Left lung (tissue), 14 donors: ENCODE measurements at regions of chr15 and their contacts with region 1.

Region 1: GRCh38 chr15:77186594-77187011 is 115.7 kb upstream of the TSPAN3 start:
- DNase-seq: peak in 2 of 4 donors; percentile 42 to 54
- ATAC-seq: peak; percentile 18
- H3K4me3 ChIP-seq: no peak overlapping the region
- H3K27ac ChIP-seq: peak overlapping the region in 1 of 2 donors; percentile 67
- H3K4me1 ChIP-seq: peaks cover 22 to 49% of the 10 kb centered on the region in 2 donors
- H3K27me3 ChIP-seq: no peaks in the 10 kb centered on the region
- CTCF ChIP-seq: peak in 1 of 2 donors; percentile 21

Region 2: GRCh38 chr15:77034695-77035489 is 151.7 kb before region 1 on chr15:
- intact Hi-C with region 1: no loop called
- DNase-seq: peak in 2 of 4 donors; percentile 38 to 74
- ATAC-seq: peak; percentile 46
- H3K4me3 ChIP-seq: no peak overlapping the region
- H3K27ac ChIP-seq: no peak overlapping the region
- H3K4me1 ChIP-seq: no peaks in the 10 kb centered on the region
- H3K27me3 ChIP-seq: peaks cover 0 to 16% of the 10 kb centered on the region in 2 donors
- CTCF ChIP-seq: peak; percentile 25 to 59

Region 3: DNA sequence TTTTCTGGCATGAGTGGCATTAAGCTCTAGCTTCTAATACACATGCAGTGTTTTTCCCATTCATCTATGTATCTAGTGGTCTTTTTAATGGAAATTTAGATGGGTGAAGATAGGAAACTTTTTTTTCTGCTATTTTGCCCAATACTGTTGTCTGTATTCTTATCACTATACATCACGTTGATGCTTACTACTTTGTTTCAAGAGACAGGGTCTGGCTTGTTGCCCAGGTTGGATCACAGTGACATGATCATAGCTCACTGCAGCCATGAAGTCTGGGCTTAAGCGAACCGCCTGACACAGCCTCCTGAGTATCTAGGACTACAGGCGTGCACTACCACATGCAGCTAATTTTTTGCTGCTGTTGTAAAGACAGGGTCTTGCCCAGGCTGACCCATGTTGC is 148.7 kb after region 1 on chr15:
- intact Hi-C with region 1: no loop called
- DNase-seq: no peak
- ATAC-seq: no peak
- H3K4me3 ChIP-seq: no peak overlapping the region
- H3K27ac ChIP-seq: no peak overlapping the region
- H3K4me1 ChIP-seq: no peaks in the 10 kb centered on the region
- H3K27me3 ChIP-seq: no peaks in the 10 kb centered on the region
- CTCF ChIP-seq: no peak

Region 4: GRCh38 chr15:77538027-77538451 is 351.4 kb after region 1 on chr15:
- intact Hi-C with region 1: loop called in 1 of 2 experiments (anchors 10 kb)
- DNase-seq: peak in 1 of 4 donors; percentile 27
- ATAC-seq: no peak
- H3K4me3 ChIP-seq: no peak overlapping the region
- H3K27ac ChIP-seq: no peak overlapping the region
- H3K4me1 ChIP-seq: peaks cover 11 to 16% of the 10 kb centered on the region in 2 donors
- H3K27me3 ChIP-seq: no peaks in the 10 kb centered on the region
- CTCF ChIP-seq: no peak